ENCODE measurements at regions of chr16 and their contacts with region 1.

Region 1: GRCh38 chr16:11515540-11516430 is 70.9 kb downstream of the LITAF start:
- DNase-seq: no peak

Region 2: GRCh38 chr16:11423315-11424117 is 92.3 kb before region 1 on chr16:
- intact Hi-C with region 1: no loop called
- DNase-seq: no peak

Region 3: GRCh38 chr16:11557801-11558200 is 42.0 kb after region 1 on chr16:
- intact Hi-C with region 1: loop called in 1 of 2 experiments (anchors 1 kb)
- DNase-seq: peak; percentile 44